Posterior vena cava (tissue), 2 donors: ENCODE measurements at regions of chr4 and their contacts with region 1.

Region 1: DNA sequence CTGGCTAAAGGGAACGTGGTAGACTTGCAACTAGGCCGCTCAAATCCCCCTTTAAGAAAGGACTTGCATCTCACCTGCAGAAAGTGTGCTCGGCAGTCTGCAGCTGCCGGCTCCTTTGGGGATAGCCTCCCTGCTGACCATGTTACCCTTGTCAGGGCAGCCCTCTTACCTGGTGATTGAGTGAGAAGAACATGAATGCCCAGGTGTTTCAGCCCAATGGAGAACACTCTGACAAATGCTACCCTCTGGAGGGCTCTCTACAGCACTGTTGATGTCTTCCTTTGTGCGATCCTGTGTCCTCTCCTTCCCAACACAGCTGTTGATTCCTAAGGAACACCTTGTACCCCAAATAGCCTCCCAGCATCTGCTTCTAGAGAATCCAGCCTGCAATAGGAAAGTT is 178.7 kb upstream of the LDB2 start:
- DNase-seq: no peak

Region 2: DNA sequence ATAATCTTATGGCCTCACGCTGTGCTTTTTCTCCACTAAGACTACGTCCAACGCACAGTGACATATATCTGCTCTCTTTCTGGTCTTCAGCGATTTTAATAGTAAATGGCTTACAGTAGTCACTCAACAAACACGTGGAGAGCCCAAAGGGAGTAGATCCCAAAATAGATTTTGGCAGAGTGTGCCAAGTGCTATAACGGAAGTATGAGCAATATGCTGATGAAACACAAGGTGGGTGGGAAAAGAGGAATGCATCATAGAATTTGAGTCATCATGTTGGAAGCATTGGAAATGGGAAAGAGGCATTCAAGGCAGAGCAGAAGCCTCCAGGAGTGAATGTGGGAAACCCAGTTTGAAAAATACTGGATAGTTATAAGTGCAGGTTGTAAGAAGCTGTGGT is 49.6 kb before region 1 on chr4:
- intact Hi-C with region 1: loop called in 1 of 2 experiments (anchors 1 kb)
- DNase-seq: no peak

Region 3: GRCh38 chr4:17092736-17093437 is 15.8 kb after region 1 on chr4:
- intact Hi-C with region 1: no loop called
- DNase-seq: no peak